Activated CD4-positive, alpha-beta memory T cell treated with anti-CD3 and anti-CD28 coated beads for 36 hours (primary cell): ENCODE measurements at regions of chr2 and their contacts with region 1.

Region 1: GRCh38 chr2:144357623-144358373 is 162.1 kb downstream of the ZEB2 start:
- DNase-seq: peak; percentile 61
- H3K4me3 Mint-ChIP-seq: peak overlapping the region; percentile 12
- H3K27ac Mint-ChIP-seq: peak overlapping the region; percentile 88
- H3K4me1 Mint-ChIP-seq: peaks cover 26% of the 10 kb centered on the region
- H3K27me3 Mint-ChIP-seq: no peaks in the 10 kb centered on the region

Region 2: DNA sequence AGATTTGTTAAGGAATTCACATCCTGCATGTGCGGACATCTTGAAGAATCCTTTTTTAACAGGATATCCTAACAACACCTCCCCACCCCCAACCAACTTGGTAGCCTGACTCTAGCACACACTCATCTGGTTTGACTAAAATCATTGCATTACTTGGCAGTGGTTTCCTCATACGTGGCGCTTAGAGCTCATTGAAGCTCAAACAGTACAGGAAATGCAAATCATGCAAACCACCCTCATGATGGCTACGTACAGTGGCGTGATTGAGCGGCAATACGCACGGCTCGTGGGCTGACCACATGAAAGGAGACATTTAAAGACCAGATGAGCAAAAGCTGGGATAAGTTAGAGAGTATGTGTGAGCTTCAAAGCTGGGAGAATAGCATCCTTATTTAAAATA is 174.1 kb before region 1 on chr2:
- CTCF ChIA-PET with region 1: no interaction called
- POLR2A ChIA-PET with region 1: no interaction called
- intact Hi-C with region 1: loop called (anchors 1 kb)
- DNase-seq: peak; percentile 89
- H3K4me3 Mint-ChIP-seq: peak overlapping the region; percentile 52
- H3K27ac Mint-ChIP-seq: peak overlapping the region; percentile 87
- H3K4me1 Mint-ChIP-seq: peaks cover 37% of the 10 kb centered on the region
- H3K27me3 Mint-ChIP-seq: no peaks in the 10 kb centered on the region

Region 3: GRCh38 chr2:144374163-144374661 is 16.4 kb after region 1 on chr2:
- CTCF ChIA-PET with region 1: interaction called, 3 read pairs
- POLR2A ChIA-PET with region 1: interaction called, 3 read pairs
- intact Hi-C with region 1: loop called (anchors 1 kb)
- DNase-seq: peak; percentile 21
- H3K4me3 Mint-ChIP-seq: no peak overlapping the region
- H3K27ac Mint-ChIP-seq: peak overlapping the region; percentile 69
- H3K4me1 Mint-ChIP-seq: peaks cover 44% of the 10 kb centered on the region
- H3K27me3 Mint-ChIP-seq: peaks cover 7% of the 10 kb centered on the region

Region 4: GRCh38 chr2:144414324-144414845 is 56.6 kb after region 1 on chr2:
- CTCF ChIA-PET with region 1: no interaction called
- POLR2A ChIA-PET with region 1: no interaction called
- intact Hi-C with region 1: loop called (anchors 2 kb)
- DNase-seq: peak; percentile 40
- H3K4me3 Mint-ChIP-seq: no peak overlapping the region
- H3K27ac Mint-ChIP-seq: peak overlapping the region; percentile 66
- H3K4me1 Mint-ChIP-seq: peaks cover 24% of the 10 kb centered on the region
- H3K27me3 Mint-ChIP-seq: no peaks in the 10 kb centered on the region

Region 5: GRCh38 chr2:144456680-144457079 is 98.9 kb after region 1 on chr2:
- CTCF ChIA-PET with region 1: no interaction called
- POLR2A ChIA-PET with region 1: no interaction called
- intact Hi-C with region 1: loop called (anchors 1 kb)
- DNase-seq: peak; percentile 31
- H3K4me3 Mint-ChIP-seq: no peak overlapping the region
- H3K27ac Mint-ChIP-seq: no peak overlapping the region
- H3K4me1 Mint-ChIP-seq: peaks cover 52% of the 10 kb centered on the region
- H3K27me3 Mint-ChIP-seq: peaks cover 13% of the 10 kb centered on the region